ENCODE measurements at regions of chr2 and their contacts with region 1.

Region 1: GRCh38 chr2:27356382-27357181 is at the start of gene GTF3C2:
- DNase-seq: peak; percentile 94
- H3K4me3 Mint-ChIP-seq: peak within 1 kb of the TSS; percentile 99
- H3K27ac Mint-ChIP-seq: peak within 1 kb of the TSS; percentile 99
- H3K4me1 Mint-ChIP-seq: peaks cover 59% of the 10 kb centered on the region
- H3K27me3 Mint-ChIP-seq: no peaks in the 10 kb centered on the region
- total RNA-seq, gene GTF3C2: 62.9 to 72.3 TPM

Region 2: GRCh38 chr2:27123302-27124231 is 233.0 kb before region 1 on chr2 and contains the start of gene ABHD1:
- CTCF ChIA-PET with region 1: no interaction called
- intact Hi-C with region 1: no loop called
- DNase-seq: peak; percentile 51
- H3K4me3 Mint-ChIP-seq: peak within 1 kb of the TSS; percentile 79
- H3K27ac Mint-ChIP-seq: no peak within 1 kb of the TSS
- H3K4me1 Mint-ChIP-seq: peaks cover 12% of the 10 kb centered on the region
- H3K27me3 Mint-ChIP-seq: peaks cover 16% of the 10 kb centered on the region
- total RNA-seq, gene ABHD1: 0.17 to 0.19 TPM

Region 3: GRCh38 chr2:27211829-27212627 is 144.6 kb before region 1 on chr2 and contains the starts of genes ATRAID and SLC5A6:
- CTCF ChIA-PET with region 1: no interaction called
- intact Hi-C with region 1: loop called (anchors 1 kb)
- DNase-seq: peak; percentile 88
- H3K4me3 Mint-ChIP-seq: peak within 1 kb of the TSS; percentile 98
- H3K27ac Mint-ChIP-seq: peak within 1 kb of the TSS; percentile 99
- H3K4me1 Mint-ChIP-seq: peaks cover 29% of the 10 kb centered on the region
- H3K27me3 Mint-ChIP-seq: no peaks in the 10 kb centered on the region
- total RNA-seq, gene ATRAID: 80.5 to 80.8 TPM
- total RNA-seq, gene SLC5A6: 22.6 to 24.8 TPM

Region 4: GRCh38 chr2:27322766-27323595 is 33.6 kb before region 1 on chr2 and contains the start of gene MPV17:
- CTCF ChIA-PET with region 1: interaction called, 3 read pairs
- intact Hi-C with region 1: loop called (anchors 1 kb)
- DNase-seq: peak; percentile 95
- H3K4me3 Mint-ChIP-seq: peak within 1 kb of the TSS; percentile 84
- H3K27ac Mint-ChIP-seq: peak within 1 kb of the TSS; percentile 85
- H3K4me1 Mint-ChIP-seq: peaks cover 14% of the 10 kb centered on the region
- H3K27me3 Mint-ChIP-seq: no peaks in the 10 kb centered on the region
- total RNA-seq, gene MPV17: 80.2 to 82.3 TPM

Region 5: GRCh38 chr2:27380626-27381545 is 24.3 kb after region 1 on chr2 and contains the start of gene ZNF513:
- CTCF ChIA-PET with region 1: no interaction called
- intact Hi-C with region 1: loop called (anchors 1 kb)
- DNase-seq: peak; percentile 93
- H3K4me3 Mint-ChIP-seq: peak within 1 kb of the TSS; percentile 79
- H3K27ac Mint-ChIP-seq: peak within 1 kb of the TSS; percentile 86
- H3K4me1 Mint-ChIP-seq: peaks cover 30% of the 10 kb centered on the region
- H3K27me3 Mint-ChIP-seq: no peaks in the 10 kb centered on the region
- total RNA-seq, gene ZNF513: 4.9 to 5.2 TPM

Region 6: DNA sequence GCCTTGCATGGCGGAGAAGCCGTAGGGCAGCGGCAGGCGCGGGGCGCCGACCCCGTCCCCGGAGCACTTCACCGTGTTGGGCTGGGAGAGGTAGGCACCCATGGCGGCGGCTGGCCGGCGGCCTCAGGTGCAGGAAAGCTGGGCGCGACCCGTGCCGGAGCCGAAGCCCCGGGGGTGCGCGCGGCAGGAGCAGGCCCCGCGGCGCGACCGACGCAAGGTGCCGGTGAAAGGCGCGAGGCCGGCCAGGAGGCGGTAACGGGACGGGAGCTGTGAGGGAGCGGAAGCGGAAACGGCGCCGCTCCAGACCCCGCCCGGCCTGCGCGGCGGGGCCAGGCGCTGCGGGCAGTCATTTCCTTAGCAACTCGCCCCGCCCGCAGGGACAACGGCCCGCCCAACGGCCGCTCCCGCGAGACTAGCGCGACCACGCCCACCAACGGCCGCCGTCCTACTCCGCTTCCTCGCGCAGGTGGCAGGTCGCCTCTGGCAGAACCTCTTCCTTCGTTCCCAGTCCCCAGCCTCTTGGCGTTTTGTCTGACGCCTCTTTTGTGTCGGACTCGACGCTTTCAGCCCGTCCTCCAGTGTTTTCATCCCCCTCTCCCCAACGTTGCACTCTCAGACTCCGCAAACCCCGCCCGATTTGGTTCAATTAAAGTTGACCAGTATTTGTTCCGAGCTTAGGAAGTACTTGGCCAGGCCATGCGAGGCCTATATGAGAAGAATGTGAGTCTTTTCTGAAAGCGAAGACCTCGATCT is 52.9 kb after region 1 on chr2 and contains the start of gene PPM1G:
- CTCF ChIA-PET with region 1: no interaction called
- intact Hi-C with region 1: loop called (anchors 1 kb)
- DNase-seq: peak; percentile 97
- H3K4me3 Mint-ChIP-seq: peak within 1 kb of the TSS; percentile 89
- H3K27ac Mint-ChIP-seq: peak within 1 kb of the TSS; percentile 87
- H3K4me1 Mint-ChIP-seq: peaks cover 32% of the 10 kb centered on the region
- H3K27me3 Mint-ChIP-seq: no peaks in the 10 kb centered on the region
- total RNA-seq, gene PPM1G: 92.3 to 101 TPM

Region 7: DNA sequence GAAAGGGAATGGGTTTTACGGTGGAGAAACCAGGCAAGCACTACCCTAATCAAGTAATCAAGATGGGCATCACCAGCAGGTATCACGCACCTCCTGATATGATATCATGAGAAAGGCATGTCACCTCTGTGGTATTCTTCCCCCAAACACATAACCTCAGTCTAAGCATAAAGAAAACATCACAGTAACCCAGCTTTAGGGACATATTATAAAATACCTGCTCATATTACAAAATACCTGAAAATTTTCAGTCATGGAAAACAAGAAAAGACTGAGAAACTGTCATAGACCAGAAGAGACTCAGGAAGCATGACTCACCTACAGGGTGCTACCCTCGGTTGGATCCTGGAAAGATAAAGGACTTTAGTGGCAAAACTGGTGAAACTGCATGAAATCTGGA is 170.6 kb after region 1 on chr2:
- CTCF ChIA-PET with region 1: no interaction called
- intact Hi-C with region 1: no loop called
- DNase-seq: no peak
- H3K4me3 Mint-ChIP-seq: no peak overlapping the region
- H3K27ac Mint-ChIP-seq: no peak overlapping the region
- H3K4me1 Mint-ChIP-seq: peaks cover 4% of the 10 kb centered on the region
- H3K27me3 Mint-ChIP-seq: peaks cover 7% of the 10 kb centered on the region

Region 8: GRCh38 chr2:27663463-27664249 is 307.1 kb after region 1 on chr2 and contains the starts of genes SLC4A1AP and SUPT7L:
- CTCF ChIA-PET with region 1: no interaction called
- intact Hi-C with region 1: loop called (anchors 2 kb)
- DNase-seq: peak; percentile 76
- H3K4me3 Mint-ChIP-seq: peak within 1 kb of the TSS; percentile 98
- H3K27ac Mint-ChIP-seq: peak within 1 kb of the TSS; percentile 99
- H3K4me1 Mint-ChIP-seq: peaks cover 47% of the 10 kb centered on the region
- H3K27me3 Mint-ChIP-seq: no peaks in the 10 kb centered on the region
- total RNA-seq, gene SLC4A1AP: 21.2 to 22.2 TPM
- total RNA-seq, gene SUPT7L: 27.8 to 29.7 TPM

Measured in activated naive CD4-positive, alpha-beta T cell treated with anti-CD3 and anti-CD28 coated beads for 36 hours (primary cell).